HEK293 (cell line): ENCODE measurements at regions of chr6 and their contacts with region 1.

Region 1: DNA sequence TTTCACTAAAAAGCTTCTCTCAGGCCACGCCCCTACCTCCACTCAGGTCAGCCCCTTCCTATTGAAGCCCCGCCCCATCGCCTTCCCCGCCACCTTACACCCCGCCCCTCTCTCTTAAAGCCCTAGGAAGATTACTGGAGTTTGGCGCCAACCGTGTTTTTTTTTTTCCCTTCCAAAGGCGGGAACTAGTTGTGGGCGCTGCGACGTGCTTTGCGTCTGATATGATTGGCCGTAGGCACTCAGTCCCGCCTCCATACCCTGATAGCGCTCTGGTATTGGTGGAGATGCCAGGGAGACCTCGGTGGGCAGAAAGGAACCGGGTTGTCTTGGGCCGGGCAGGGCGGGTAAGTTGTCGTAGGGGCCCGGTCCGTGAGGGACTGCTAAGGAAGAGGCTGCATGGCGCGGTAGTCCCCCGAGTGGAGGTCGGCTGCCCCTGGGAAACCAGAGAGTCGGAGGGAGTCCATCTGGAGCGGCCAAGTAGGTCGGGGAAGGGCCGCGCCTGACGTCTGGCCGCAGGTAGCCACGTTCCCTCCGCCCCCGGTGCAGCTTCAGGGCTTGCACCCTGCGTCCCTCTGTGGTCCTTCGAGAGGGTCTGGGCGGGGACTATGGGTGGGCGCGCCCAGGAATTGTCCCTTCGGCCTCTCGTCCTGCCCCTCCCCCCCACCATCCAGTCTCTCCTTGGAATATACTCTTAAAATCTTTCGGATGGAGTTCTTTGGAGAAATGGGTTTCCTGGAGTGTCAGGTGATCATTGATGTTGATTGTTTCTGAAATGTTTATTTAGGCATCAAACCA is at the start of gene CASP8AP2:
- H3K4me3 ChIP-seq: peak within 1 kb of the TSS; percentile 95
- H3K27ac ChIP-seq: peak within 1 kb of the TSS; percentile 91
- H3K4me1 ChIP-seq: no peaks in the 10 kb centered on the region
- CTCF ChIP-seq: no peak

Region 2: GRCh38 chr6:89840538-89840937 is 10.8 kb after region 1 on chr6:
- CTCF ChIA-PET with region 1: interaction called, 3 read pairs
- POLR2A ChIA-PET with region 1: interaction called, 41 read pairs
- H3K4me3 ChIP-seq: no peak overlapping the region
- H3K27ac ChIP-seq: no peak overlapping the region
- H3K4me1 ChIP-seq: peaks cover 18% of the 10 kb centered on the region; the same call in 1 of the 2 replicates
- CTCF ChIP-seq: no peak